ENCODE measurements at regions of chrX and their contacts with region 1.

Region 1: GRCh38 chrX:10173316-10173900 is 16.6 kb downstream of the CLCN4 start:
- DNase-seq: peak; percentile 58 to 60
- H3K4me3 ChIP-seq: peak overlapping the region in 1 of 4 experiments; percentile 35; a peak in 2 of 8 replicates
- H3K27ac ChIP-seq: peak overlapping the region; percentile 60; the same call in 1 of the 2 replicates
- H3K4me1 ChIP-seq: peaks cover 4 to 14% (median 12%) of the 10 kb centered on the region in 4 experiments
- H3K27me3 ChIP-seq: no peaks in the 10 kb centered on the region; a peak in 1 of 7 replicates
- CTCF ChIP-seq: no peak
- EP300 ChIP-seq: no peak
- POLR2A ChIP-seq: peak in 1 of 2 experiments; percentile 15; a peak in 1 of 3 replicates
- RAD21 ChIP-seq: no peak

Region 2: GRCh38 chrX:10156199-10157031 is 17.0 kb before region 1 on chrX and contains the start of gene CLCN4:
- CTCF ChIA-PET with region 1: interaction called, 4 read pairs
- POLR2A ChIA-PET with region 1: interaction called, 14 read pairs
- DNase-seq: peak in 1 of 2 experiments; percentile 69
- H3K4me3 ChIP-seq: peak within 1 kb of the TSS in 2 of 4 experiments; percentile 9 to 55; a peak in 4 of 8 replicates
- H3K27ac ChIP-seq: no peak within 1 kb of the TSS; the same call in 1 of the 2 replicates
- H3K4me1 ChIP-seq: peaks cover 0 to 9% (median 5%) of the 10 kb centered on the region in 4 experiments; a peak in 5 of 7 replicates
- H3K27me3 ChIP-seq: no peaks in the 10 kb centered on the region; a peak in 1 of 7 replicates
- CTCF ChIP-seq: no peak
- EP300 ChIP-seq: no peak
- POLR2A ChIP-seq: no peak
- RAD21 ChIP-seq: no peak
- total RNA-seq, gene CLCN4: 7.5 and 11.2 TPM in 2 replicates

Region 3: DNA sequence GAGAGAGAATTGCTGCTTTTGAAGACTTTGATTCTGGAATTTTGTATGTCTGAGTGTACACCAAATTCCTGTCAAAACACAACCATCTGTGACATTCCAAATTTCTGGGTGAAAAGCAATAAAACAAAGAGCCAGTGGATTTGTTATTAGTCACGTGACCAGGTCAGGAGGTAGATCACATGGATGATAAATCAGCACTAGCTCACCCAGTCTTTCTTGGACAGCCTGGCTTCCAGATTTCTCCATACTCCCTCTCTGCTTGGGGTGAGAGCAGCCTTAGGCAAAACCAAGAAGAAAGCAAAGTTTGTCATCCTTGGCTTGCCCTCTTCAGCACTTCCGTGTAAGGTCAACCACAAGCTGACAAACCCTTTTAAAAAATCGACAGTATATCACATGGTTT is 177.6 kb after region 1 on chrX:
- CTCF ChIA-PET with region 1: no interaction called
- POLR2A ChIA-PET with region 1: no interaction called
- DNase-seq: no peak
- H3K4me3 ChIP-seq: no peak overlapping the region
- H3K27ac ChIP-seq: no peak overlapping the region
- H3K4me1 ChIP-seq: no peaks in the 10 kb centered on the region
- H3K27me3 ChIP-seq: no peaks in the 10 kb centered on the region
- CTCF ChIP-seq: no peak
- EP300 ChIP-seq: no peak
- POLR2A ChIP-seq: no peak
- RAD21 ChIP-seq: no peak